Calu3 (cell line): ENCODE measurements at regions of chr15 and their contacts with region 1.

Region 1: DNA sequence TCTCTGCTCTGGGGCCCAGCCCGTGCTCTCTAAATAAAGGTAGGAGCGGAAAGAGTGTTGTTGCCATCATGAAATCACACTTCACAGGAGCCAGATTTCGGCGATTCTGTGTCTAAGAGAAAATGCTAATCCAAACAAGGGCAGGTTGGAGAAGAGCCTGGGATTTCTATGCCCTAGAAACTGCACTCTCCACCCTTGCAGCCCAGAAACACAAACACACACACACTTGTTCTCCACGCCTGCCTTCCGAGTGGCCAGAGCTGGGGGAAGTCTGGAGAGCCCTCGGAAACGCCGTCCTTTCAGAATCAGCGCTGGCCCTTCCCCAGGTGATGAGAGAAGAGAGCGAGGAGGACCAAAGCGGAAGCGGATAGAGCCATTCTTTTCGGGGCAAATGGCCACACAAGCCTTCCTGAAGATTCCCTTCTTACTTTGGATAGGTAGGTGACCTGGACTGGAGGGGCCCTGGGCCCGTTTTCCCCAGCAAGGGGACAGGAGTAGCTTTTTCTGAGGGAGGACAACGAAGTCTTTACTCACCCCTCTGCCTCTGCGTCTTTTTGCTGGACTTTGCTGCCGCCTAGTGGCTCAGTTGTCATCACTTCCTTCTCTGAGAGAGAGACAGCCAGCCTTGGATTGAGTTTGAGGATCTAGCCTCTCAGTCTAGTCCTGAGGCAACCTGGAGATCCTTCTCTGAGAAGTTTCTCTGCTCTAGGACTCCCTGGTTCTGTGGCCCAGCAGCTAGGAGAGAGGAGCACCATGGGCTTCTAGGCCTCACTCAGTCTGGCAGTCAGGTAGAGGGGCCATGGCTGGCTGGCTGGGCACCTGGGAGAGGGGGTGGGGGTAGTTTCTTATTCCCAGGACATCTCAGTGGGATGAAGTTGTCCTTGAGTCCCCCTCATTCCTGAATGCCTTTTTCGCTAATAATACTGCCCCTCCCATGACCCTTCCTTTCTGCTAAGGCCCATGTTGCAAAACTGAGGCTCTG is 37.7 kb downstream of the SENP8 start:
- DNase-seq: peak; percentile 91
- H3K4me3 Mint-ChIP-seq: peak overlapping the region; percentile 79
- H3K27ac Mint-ChIP-seq: peak overlapping the region; percentile 63
- H3K4me1 Mint-ChIP-seq: peaks cover 22% of the 10 kb centered on the region
- H3K27me3 Mint-ChIP-seq: no peaks in the 10 kb centered on the region
- CTCF ChIP-seq: peak; percentile 90

Region 2: DNA sequence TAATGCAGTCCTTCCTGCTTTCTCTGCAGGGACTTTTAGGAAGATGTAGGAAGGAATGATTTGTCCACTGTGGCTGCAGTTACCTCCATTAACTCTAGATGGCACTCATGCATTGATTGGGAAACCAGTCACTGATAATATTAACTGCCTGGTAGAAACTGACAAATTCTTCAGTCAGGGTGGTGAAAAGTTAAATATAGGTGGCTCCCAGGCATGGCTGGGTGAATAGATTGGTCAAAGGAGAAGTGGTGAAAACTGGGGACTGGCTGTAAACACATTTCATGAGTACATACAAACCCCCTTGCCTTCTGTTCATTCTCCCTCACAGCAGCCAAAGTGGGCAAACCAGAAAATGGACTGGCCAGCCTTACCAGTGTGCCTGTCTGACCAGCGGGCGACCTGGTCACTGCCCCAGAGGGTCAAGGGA is 707.2 kb before region 1 on chr15:
- CTCF ChIA-PET with region 1: no interaction called
- intact Hi-C with region 1: loop called (anchors 10 kb)
- DNase-seq: peak; percentile 72
- H3K4me3 Mint-ChIP-seq: no peak overlapping the region
- H3K27ac Mint-ChIP-seq: no peak overlapping the region
- H3K4me1 Mint-ChIP-seq: no peaks in the 10 kb centered on the region
- H3K27me3 Mint-ChIP-seq: no peaks in the 10 kb centered on the region
- CTCF ChIP-seq: peak; percentile 73

Region 3: DNA sequence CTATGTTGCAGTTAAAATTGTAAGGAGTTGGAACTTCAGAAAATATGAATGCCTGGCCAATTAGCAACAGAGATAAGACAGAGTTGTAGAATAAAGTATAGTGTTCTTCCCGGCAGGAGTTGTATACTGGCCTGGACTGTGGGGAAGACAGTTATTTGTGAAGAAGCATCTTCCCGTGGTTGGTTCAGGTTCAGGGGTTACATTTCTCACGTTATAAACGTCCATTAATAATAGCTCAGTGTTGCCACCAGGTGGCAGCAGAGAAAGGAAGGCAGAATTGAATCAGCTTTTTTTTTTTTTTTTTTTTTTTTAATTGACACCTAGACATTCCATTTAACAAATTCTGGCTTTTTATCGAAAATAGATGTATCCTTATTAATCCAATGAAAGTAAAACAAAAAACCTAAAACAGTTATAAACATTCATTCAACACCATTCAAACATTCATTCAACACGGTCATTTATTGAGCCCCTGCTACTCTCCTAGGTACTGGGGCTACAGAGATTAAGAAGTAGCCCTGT is 412.0 kb before region 1 on chr15:
- CTCF ChIA-PET with region 1: interaction called, 16 read pairs
- intact Hi-C with region 1: no loop called
- DNase-seq: peak; percentile 77
- H3K4me3 Mint-ChIP-seq: no peak overlapping the region
- H3K27ac Mint-ChIP-seq: no peak overlapping the region
- H3K4me1 Mint-ChIP-seq: peaks cover 61% of the 10 kb centered on the region
- H3K27me3 Mint-ChIP-seq: no peaks in the 10 kb centered on the region
- CTCF ChIP-seq: peak; percentile 61

Region 4: DNA sequence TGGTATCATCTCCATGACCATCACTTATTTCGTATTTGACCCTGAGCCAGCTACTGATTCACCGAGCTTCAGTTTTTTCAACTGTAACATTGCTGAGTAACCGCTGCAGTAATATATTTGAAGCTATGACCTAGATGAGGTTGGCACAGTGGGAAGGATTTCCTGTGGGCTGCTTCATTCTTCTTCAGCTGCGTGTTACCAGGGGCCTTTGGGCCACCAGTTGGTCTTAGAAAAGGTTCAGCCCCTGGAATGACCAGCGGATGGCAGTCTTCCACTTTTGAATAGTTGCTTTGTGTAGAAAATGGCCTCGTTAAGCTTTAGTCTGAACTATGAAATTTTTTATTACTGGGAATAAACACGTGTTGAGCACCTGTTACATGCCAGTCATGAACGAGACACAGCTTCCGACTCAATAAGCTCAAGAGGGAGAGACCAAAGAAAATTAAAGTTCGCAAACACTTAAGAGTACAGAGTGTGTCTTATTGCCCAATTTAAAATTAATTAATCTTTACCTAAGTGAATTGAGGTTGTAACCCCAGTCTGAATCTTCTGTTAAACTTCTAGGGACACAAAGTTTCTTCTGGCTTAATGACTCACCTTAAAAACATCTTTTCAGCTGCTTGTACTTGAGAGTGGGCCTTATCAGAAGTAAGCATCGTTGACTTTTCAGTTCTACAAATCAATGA is 403.2 kb before region 1 on chr15:
- CTCF ChIA-PET with region 1: interaction called, 23 read pairs
- intact Hi-C with region 1: loop called (anchors 2 kb)
- DNase-seq: peak; percentile 82
- H3K4me3 Mint-ChIP-seq: no peak overlapping the region
- H3K27ac Mint-ChIP-seq: peak overlapping the region; percentile 78
- H3K4me1 Mint-ChIP-seq: peaks cover 61% of the 10 kb centered on the region
- H3K27me3 Mint-ChIP-seq: no peaks in the 10 kb centered on the region
- CTCF ChIP-seq: peak; percentile 58

Region 5: GRCh38 chr15:71807691-71808091 is 348.2 kb before region 1 on chr15:
- CTCF ChIA-PET with region 1: interaction called, 4 read pairs
- intact Hi-C with region 1: loop called (anchors 1 kb)
- DNase-seq: no peak
- H3K4me3 Mint-ChIP-seq: no peak overlapping the region
- H3K27ac Mint-ChIP-seq: no peak overlapping the region
- H3K4me1 Mint-ChIP-seq: peaks cover 30% of the 10 kb centered on the region
- H3K27me3 Mint-ChIP-seq: no peaks in the 10 kb centered on the region
- CTCF ChIP-seq: no peak

Region 6: GRCh38 chr15:71971905-71972304 is 184.0 kb before region 1 on chr15:
- CTCF ChIA-PET with region 1: no interaction called
- intact Hi-C with region 1: loop called (anchors 10 kb)
- DNase-seq: peak; percentile 20
- H3K4me3 Mint-ChIP-seq: no peak overlapping the region
- H3K27ac Mint-ChIP-seq: peak overlapping the region; percentile 20
- H3K4me1 Mint-ChIP-seq: peaks cover 52% of the 10 kb centered on the region
- H3K27me3 Mint-ChIP-seq: no peaks in the 10 kb centered on the region
- CTCF ChIP-seq: no peak

Region 7: DNA sequence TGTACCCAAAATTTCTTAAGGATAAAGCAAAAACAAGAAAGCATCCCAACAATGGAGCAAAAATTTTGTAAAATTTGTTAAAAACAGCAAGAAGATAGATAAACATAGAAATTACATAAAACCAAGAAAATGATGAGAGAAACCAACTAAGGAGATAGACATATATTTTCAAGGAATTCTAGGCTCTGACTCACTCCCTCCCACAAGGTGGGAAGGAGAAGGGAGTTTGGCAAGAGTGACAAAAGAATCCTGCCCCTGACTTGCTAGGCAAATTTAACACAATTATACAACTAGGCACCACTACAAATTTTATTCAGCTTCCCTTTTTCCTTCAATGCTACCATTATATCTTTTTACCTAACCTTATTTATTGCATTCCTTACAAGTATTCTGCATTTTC is 108.9 kb before region 1 on chr15:
- CTCF ChIA-PET with region 1: interaction called, 3 read pairs
- intact Hi-C with region 1: loop called (anchors 10 kb)
- DNase-seq: no peak
- H3K4me3 Mint-ChIP-seq: no peak overlapping the region
- H3K27ac Mint-ChIP-seq: no peak overlapping the region
- H3K4me1 Mint-ChIP-seq: no peaks in the 10 kb centered on the region
- H3K27me3 Mint-ChIP-seq: no peaks in the 10 kb centered on the region
- CTCF ChIP-seq: no peak